Pancreas (tissue), 10 donors: ENCODE measurements at regions of chr12 and their contacts with region 1.

Region 1: GRCh38 chr12:42129595-42130204 is 15.0 kb downstream of the GXYLT1 start:
- DNase-seq: peak in 1 of 6 donors; percentile 51
- ATAC-seq: peak; percentile 79 to 91 (median 88)
- H3K4me3 ChIP-seq: no peak overlapping the region
- H3K27ac ChIP-seq: no peak overlapping the region
- H3K4me1 ChIP-seq: peaks cover 2 to 19% (median 16%) of the 10 kb centered on the region in 3 donors
- H3K27me3 ChIP-seq: no peaks in the 10 kb centered on the region
- CTCF ChIP-seq: peak; percentile 22 to 63 (median 51)

Region 2: GRCh38 chr12:41743835-41744234 is 385.9 kb before region 1 on chr12:
- intact Hi-C with region 1: no loop called
- DNase-seq: no peak
- ATAC-seq: no peak
- H3K4me3 ChIP-seq: no peak overlapping the region
- H3K27ac ChIP-seq: no peak overlapping the region
- H3K4me1 ChIP-seq: no peaks in the 10 kb centered on the region
- H3K27me3 ChIP-seq: no peaks in the 10 kb centered on the region
- CTCF ChIP-seq: no peak

Region 3: DNA sequence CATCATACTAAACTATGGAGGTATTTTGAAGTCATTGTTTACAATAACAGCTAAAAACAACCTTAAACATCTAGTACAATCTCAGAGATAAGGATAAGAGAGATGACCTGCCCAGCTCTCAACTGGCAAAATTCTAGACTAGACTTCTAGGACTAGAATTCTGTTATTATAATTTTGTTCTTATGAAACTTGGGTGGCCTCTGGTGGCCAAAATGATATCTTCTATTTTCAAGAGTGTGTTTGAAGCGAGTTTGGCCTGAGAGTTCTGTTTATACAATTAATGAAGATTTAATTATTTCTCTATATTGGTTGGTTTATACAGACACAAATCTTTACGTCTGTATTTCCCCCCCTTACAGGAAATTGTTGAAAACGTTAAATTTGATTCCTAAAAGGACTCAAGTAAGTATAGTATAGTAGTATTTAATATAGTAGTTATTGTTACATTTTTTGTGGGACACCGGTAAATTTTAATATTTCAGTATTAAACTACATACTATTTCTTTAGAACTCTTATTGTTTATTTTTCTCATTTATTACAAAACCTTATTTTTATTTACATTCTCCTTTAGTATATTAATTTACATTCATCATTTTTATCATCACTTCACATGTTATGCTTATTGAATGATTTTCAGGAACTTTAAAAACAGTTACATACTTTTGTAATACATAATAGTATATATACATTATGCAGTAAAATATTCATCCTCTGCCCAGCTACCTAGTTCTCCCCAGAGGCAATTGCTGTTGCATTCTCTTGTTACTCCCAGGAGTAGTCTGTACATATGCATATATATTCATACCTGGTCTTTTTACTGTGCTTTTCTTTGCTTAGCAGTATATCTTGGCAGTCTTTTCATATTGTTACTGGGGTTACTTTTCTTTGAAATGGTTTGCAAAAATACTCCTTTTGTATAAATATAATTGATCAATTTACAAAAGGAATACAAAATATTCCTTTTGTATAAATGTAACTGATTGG is 202.9 kb after region 1 on chr12:
- intact Hi-C with region 1: loop called in 1 of 3 experiments (anchors 10 kb)
- DNase-seq: peak in 1 of 6 donors; percentile 24
- ATAC-seq: peak; percentile 58 to 86 (median 85)
- H3K4me3 ChIP-seq: no peak overlapping the region
- H3K27ac ChIP-seq: no peak overlapping the region
- H3K4me1 ChIP-seq: peaks cover 2 to 9% (median 6%) of the 10 kb centered on the region in 3 donors
- H3K27me3 ChIP-seq: no peaks in the 10 kb centered on the region
- CTCF ChIP-seq: peak in 3 of 4 donors; percentile 29 to 44 (median 42)

Region 4: GRCh38 chr12:42346403-42347002 is 216.8 kb after region 1 on chr12:
- intact Hi-C with region 1: no loop called
- DNase-seq: no peak
- ATAC-seq: no peak
- H3K4me3 ChIP-seq: no peak overlapping the region
- H3K27ac ChIP-seq: no peak overlapping the region
- H3K4me1 ChIP-seq: no peaks in the 10 kb centered on the region
- H3K27me3 ChIP-seq: no peaks in the 10 kb centered on the region
- CTCF ChIP-seq: no peak